ENCODE measurements at regions of chr7 and their contacts with region 1.

Region 1: GRCh38 chr7:3164380-3164792 is 120.7 kb upstream of the CARD11 start:
- DNase-seq: peak; percentile 93
- ATAC-seq: peak; percentile 57
- H3K4me3 ChIP-seq: no peak overlapping the region
- H3K27ac ChIP-seq: no peak overlapping the region
- H3K4me1 ChIP-seq: peaks cover 58% of the 10 kb centered on the region
- H3K27me3 ChIP-seq: no peaks in the 10 kb centered on the region
- CTCF ChIP-seq: no peak
- EP300 ChIP-seq: peak in 1 of 2 experiments; percentile 55; a peak in 1 of 4 replicates
- POLR2A ChIP-seq: no peak
- RAD21 ChIP-seq: no peak

Region 2: GRCh38 chr7:3194501-3195141 is 30.2 kb after region 1 on chr7:
- CTCF ChIA-PET with region 1: no interaction called
- POLR2A ChIA-PET with region 1: no interaction called
- in situ Hi-C with region 1: no loop called
- intact Hi-C with region 1: loop called (anchors 1 kb)
- DNase-seq: peak; percentile 97
- ATAC-seq: peak; percentile 97
- H3K4me3 ChIP-seq: peak overlapping the region in 1 of 3 experiments; percentile 41; a peak in 1 of 6 replicates
- H3K27ac ChIP-seq: peak overlapping the region; percentile 76
- H3K4me1 ChIP-seq: peaks cover 42% of the 10 kb centered on the region
- H3K27me3 ChIP-seq: no peaks in the 10 kb centered on the region
- CTCF ChIP-seq: peak; percentile 52
- EP300 ChIP-seq: peak in 1 of 2 experiments; percentile 61; a peak in 1 of 4 replicates
- POLR2A ChIP-seq: no peak
- RAD21 ChIP-seq: peak; percentile 30; the same call in 1 of the 2 replicates

Measured in HepG2 (cell line).